Activated B cell treated with CpG ODN at 0.5 μM for 24 hours (primary cell): ENCODE measurements at regions of chr12 and their contacts with region 1.

Region 1: DNA sequence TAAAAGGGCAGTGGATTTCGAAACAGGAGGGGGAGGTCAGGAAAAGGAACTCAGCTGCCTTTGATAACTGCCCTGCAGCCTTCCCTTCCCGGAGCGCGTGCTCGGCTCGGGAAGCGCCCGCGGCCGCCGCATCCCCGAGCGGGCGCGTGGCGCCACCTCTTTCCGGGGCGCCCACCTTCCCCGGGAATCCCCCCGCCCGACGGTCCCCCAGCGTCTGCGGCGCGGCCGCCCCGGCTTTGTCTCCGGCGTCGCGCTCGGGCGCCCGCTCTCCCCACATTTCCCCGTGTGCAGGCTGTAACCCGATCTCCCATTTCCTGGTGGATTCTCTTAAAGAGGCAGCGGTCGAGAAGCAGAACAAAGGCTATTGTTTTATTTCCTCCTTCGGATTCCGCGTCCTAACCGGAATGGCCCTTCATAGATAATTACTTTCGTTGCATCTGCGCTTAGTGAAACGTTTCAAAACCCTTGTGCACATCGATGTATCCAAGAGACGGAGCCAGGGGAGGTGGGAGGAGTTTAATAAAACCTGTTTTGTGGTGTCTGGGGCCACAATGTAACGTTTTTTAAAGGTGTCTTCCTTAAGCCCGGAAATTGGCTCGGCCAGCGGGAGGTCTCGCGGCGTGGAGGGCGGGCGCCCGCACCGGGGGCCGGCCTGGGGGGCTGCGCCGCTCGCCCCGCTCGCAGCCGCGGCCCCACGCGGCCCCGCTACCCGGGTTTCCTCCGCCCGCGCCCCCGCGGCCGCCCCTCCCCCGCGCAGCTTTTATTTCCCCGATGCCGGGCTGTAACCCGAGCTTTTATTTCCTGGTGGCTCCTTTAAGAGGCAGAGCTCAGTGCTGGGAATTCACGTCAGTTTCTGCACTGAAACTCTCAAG is at the start of gene ETV6:
- DNase-seq: peak; percentile 72
- ATAC-seq: peak; percentile 54
- H3K4me3 Mint-ChIP-seq: peak within 1 kb of the TSS; percentile 99
- H3K27ac Mint-ChIP-seq: peak within 1 kb of the TSS; percentile 98
- H3K4me1 Mint-ChIP-seq: peaks cover 30% of the 10 kb centered on the region
- H3K27me3 Mint-ChIP-seq: no peaks in the 10 kb centered on the region
- CTCF ChIP-seq: no peak
- total RNA-seq, gene ETV6: 116 and 130 TPM in 2 replicates

Region 2: GRCh38 chr12:11202811-11203210 is 446.3 kb before region 1 on chr12:
- CTCF ChIA-PET with region 1: no interaction called
- POLR2A ChIA-PET with region 1: no interaction called
- intact Hi-C with region 1: no loop called
- DNase-seq: no peak
- ATAC-seq: no peak
- H3K4me3 Mint-ChIP-seq: no peak overlapping the region
- H3K27ac Mint-ChIP-seq: no peak overlapping the region
- H3K4me1 Mint-ChIP-seq: no peaks in the 10 kb centered on the region
- H3K27me3 Mint-ChIP-seq: no peaks in the 10 kb centered on the region
- CTCF ChIP-seq: no peak

Region 3: DNA sequence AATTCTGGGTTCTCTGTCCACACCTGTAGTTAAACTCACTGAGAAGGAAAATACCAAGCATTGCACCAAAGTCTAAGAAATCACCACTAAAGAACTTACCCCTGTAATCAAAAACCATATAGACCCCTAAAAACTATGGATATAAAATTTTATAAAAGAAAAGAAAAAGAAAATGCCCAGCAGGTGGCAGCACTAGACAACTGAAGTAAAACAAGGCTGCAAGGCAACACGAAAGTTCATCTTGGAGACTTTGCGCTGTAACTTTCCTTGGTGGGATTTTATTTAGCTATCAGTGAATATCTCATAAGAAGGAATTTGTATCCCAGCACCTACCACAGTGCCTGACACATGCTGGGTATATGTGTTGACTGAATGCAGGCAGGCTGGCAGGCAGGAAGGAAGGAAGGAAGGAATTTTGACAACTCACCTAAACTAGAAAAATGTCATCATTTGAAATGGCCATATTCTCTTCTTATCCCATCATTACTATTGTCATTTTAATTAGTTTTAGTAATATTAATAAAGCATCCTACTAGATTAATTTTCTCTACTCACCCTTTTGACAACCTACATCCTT is 67.8 kb before region 1 on chr12:
- CTCF ChIA-PET with region 1: no interaction called
- POLR2A ChIA-PET with region 1: interaction called, 10 read pairs
- intact Hi-C with region 1: loop called (anchors 1 kb)
- DNase-seq: no peak
- ATAC-seq: no peak
- H3K4me3 Mint-ChIP-seq: no peak overlapping the region
- H3K27ac Mint-ChIP-seq: no peak overlapping the region
- H3K4me1 Mint-ChIP-seq: peaks cover 11% of the 10 kb centered on the region
- H3K27me3 Mint-ChIP-seq: peaks cover 2% of the 10 kb centered on the region
- CTCF ChIP-seq: peak; percentile 40

Region 4: GRCh38 chr12:11667171-11667570 is 18.1 kb after region 1 on chr12:
- CTCF ChIA-PET with region 1: no interaction called
- POLR2A ChIA-PET with region 1: interaction called, 5 read pairs
- intact Hi-C with region 1: loop called (anchors 2 kb)
- DNase-seq: no peak
- ATAC-seq: no peak
- H3K4me3 Mint-ChIP-seq: no peak overlapping the region
- H3K27ac Mint-ChIP-seq: peak overlapping the region; percentile 50
- H3K4me1 Mint-ChIP-seq: peaks cover 76% of the 10 kb centered on the region
- H3K27me3 Mint-ChIP-seq: no peaks in the 10 kb centered on the region
- CTCF ChIP-seq: no peak

Region 5: GRCh38 chr12:11746024-11746771 is 97.1 kb after region 1 on chr12:
- CTCF ChIA-PET with region 1: interaction called, 7 read pairs
- POLR2A ChIA-PET with region 1: interaction called, 70 read pairs
- intact Hi-C with region 1: loop called (anchors 1 kb)
- DNase-seq: no peak
- ATAC-seq: peak; percentile 73
- H3K4me3 Mint-ChIP-seq: peak overlapping the region; percentile 67
- H3K27ac Mint-ChIP-seq: peak overlapping the region; percentile 93
- H3K4me1 Mint-ChIP-seq: peaks cover 97% of the 10 kb centered on the region
- H3K27me3 Mint-ChIP-seq: no peaks in the 10 kb centered on the region
- CTCF ChIP-seq: no peak

Region 6: DNA sequence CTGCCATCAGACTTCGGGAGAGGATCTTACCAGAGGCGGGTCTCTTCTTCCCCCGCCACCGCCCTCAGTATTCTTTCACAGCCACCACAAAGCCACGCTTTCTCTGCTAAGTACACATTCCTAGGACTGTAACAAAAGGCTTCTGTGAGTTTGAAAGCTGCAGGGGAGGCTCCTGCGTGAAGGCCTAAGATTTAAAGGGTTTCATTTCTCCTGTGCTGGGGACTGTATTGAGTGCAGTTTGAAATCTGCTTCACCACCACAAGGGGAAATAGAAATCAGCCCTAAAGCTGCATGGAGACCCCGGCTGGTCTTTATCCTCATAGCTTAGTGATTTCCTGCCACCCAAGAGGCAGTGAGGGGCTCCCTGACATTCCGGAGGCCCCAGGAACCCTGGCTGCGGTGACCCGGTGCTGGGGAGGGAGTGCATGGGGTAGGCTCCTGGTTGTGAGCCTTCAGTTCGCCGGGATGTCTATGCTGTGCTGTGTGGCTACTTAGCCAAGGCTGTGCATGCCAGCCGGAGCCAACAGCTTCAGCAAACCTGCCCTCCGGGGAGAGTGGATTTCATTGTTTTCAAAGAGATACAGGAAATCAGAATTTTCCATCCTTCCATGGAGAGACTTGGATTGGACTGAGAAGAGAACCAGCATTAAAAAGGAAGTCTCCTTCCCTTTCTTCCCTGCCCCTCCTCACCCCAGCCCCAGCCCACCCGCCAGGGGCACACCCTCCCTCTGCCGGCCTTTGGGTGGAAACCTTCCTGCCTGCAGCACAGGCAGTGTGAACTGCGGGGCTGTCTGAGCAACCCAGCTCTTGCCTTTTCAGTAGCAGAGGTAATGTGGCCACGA is 163.7 kb after region 1 on chr12:
- CTCF ChIA-PET with region 1: interaction called, 3 read pairs
- POLR2A ChIA-PET with region 1: interaction called, 17 read pairs
- intact Hi-C with region 1: loop called (anchors 2 kb)
- DNase-seq: peak; percentile 32
- ATAC-seq: peak; percentile 83
- H3K4me3 Mint-ChIP-seq: peak overlapping the region; percentile 65
- H3K27ac Mint-ChIP-seq: peak overlapping the region; percentile 87
- H3K4me1 Mint-ChIP-seq: peaks cover 66% of the 10 kb centered on the region
- H3K27me3 Mint-ChIP-seq: no peaks in the 10 kb centered on the region
- CTCF ChIP-seq: no peak

Region 7: DNA sequence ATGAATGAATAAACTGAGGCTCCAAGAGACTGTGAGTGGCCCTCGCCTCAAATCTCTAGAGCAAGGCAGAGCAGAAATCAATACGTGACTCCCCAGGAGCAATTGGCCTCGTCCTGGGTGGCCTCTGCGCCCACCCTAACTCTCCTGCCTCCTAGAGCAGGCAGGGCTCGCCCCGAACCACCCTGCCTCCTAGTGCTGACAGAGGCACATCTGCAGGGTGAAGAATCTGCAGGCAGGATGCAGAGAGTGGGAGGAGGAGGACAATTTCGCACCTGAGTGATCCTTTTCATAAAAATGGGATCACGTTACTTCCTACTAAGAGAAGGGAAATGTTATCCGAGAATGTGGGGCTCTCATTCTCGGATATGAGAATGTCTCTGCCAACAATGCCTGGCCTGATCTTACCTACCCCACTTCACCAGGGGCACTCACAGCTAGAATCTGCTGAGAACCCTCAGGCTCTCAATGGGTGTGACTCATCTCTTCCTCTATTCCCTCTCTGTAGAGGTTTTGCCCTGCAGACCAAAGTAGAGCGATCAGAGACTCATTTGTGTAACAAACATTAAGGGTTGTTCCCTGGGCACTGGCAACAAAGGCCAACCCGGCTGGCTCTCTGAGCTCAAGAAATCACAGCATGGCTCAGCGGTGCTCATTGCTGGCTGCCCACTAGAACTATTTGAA is 360.0 kb after region 1 on chr12:
- CTCF ChIA-PET with region 1: interaction called, 3 read pairs
- POLR2A ChIA-PET with region 1: interaction called, 24 read pairs
- intact Hi-C with region 1: loop called (anchors 1 kb)
- DNase-seq: no peak
- ATAC-seq: peak; percentile 60
- H3K4me3 Mint-ChIP-seq: peak overlapping the region; percentile 78
- H3K27ac Mint-ChIP-seq: peak overlapping the region; percentile 81
- H3K4me1 Mint-ChIP-seq: peaks cover 60% of the 10 kb centered on the region
- H3K27me3 Mint-ChIP-seq: no peaks in the 10 kb centered on the region
- CTCF ChIP-seq: no peak

Region 8: GRCh38 chr12:13023811-13024530 is 1374.9 kb after region 1 on chr12:
- CTCF ChIA-PET with region 1: no interaction called
- POLR2A ChIA-PET with region 1: no interaction called
- intact Hi-C with region 1: no loop called
- DNase-seq: no peak
- ATAC-seq: no peak
- H3K4me3 Mint-ChIP-seq: no peak overlapping the region
- H3K27ac Mint-ChIP-seq: no peak overlapping the region
- H3K4me1 Mint-ChIP-seq: no peaks in the 10 kb centered on the region
- H3K27me3 Mint-ChIP-seq: peaks cover 26% of the 10 kb centered on the region
- CTCF ChIP-seq: no peak